CD8-positive, alpha-beta T cell (primary cell): ENCODE measurements at regions of chr17 and their contacts with region 1.

Region 1: DNA sequence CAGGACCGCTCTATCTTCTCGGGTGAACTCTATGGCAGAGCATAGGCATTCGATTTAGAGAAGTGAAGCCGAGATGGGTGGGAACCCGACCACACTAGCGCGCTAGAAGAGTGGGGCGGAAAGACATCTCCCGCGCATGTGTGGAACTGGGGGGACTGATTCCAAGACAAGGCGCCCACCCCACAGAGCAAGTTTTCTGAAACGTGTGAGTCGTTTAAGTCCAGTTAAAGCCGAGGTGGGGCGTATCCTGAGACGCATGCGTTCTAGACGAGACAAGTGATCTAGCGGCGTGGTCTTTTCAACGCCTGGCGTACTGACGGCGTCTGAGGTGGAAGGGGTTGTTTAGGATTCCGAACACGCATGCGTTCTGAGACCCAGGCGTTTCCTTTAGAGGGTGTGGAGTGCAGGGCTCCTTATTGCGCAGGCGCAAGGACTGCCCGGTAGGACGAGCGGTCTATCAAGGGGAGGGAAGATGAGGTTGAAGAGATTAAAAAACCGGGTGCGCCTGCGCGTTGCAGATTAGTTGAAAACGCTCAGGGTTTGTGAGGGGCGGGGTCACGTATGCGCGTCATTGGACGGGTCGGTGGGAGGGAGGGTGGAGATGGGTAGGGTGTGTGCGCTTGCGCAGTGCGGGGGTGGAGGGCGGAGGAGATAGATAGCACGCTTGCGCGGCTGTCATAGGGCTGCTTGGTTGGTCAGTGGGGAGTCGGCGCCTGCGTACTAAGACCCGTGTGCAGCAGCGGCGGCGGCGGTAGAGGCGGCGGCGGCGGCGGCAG is at the start of gene EIF5A:
- DNase-seq: peak; percentile 100
- ATAC-seq: peak; percentile 67
- H3K4me3 ChIP-seq: peak within 1 kb of the TSS; percentile 66 to 92
- H3K4me3 Mint-ChIP-seq: peak within 1 kb of the TSS; percentile 98
- H3K27ac ChIP-seq: peak within 1 kb of the TSS; percentile 91 to 94
- H3K27ac Mint-ChIP-seq: peak within 1 kb of the TSS; percentile 99
- H3K4me1 ChIP-seq: peaks cover 25% of the 10 kb centered on the region
- H3K4me1 Mint-ChIP-seq: peaks cover 40% of the 10 kb centered on the region
- H3K27me3 ChIP-seq: no peaks in the 10 kb centered on the region
- H3K27me3 Mint-ChIP-seq: no peaks in the 10 kb centered on the region
- CTCF ChIP-seq: no peak
- total RNA-seq, gene EIF5A: 581 to 613 TPM

Region 2: DNA sequence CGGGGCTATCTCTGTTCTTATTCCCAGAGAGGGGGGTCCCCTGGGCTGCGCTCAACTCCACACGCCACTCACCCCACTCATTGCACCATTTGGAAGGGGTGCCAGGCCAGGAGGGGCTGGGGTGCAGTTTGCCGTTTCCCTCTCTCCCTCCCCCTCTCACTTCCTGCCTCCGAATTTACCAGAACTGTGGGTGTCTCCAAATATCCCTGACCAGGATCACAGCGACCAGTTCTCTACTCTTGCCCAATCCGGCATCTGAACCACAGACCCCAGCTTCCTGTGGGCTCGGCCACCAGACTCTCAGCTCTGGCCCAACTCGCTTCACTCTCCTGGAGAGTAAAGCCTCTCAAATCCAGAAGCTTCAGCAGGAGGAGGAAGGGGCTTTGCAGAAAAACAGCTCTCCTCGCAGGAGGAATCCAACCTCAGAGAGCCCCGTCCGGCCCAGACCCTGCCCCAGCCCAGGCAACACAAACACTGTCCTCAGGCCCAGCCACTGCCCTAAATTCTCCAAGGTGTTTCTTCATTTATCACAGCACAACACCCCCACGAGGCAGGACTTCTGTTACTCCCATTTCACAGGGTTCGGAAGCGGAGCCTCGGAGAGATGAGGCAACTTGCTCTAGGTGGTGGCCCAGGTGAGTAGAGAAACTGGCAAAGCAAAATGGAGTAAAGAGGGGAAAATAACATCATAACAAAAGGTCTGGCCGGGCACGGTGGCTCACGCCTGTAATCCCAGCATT is 192.1 kb before region 1 on chr17:
- CTCF ChIA-PET with region 1: no interaction called
- POLR2A ChIA-PET with region 1: no interaction called
- intact Hi-C with region 1: no loop called
- DNase-seq: no peak
- ATAC-seq: no peak
- H3K4me3 ChIP-seq: no peak overlapping the region
- H3K4me3 Mint-ChIP-seq: no peak overlapping the region
- H3K27ac ChIP-seq: no peak overlapping the region
- H3K27ac Mint-ChIP-seq: no peak overlapping the region
- H3K4me1 ChIP-seq: no peaks in the 10 kb centered on the region
- H3K4me1 Mint-ChIP-seq: no peaks in the 10 kb centered on the region
- H3K27me3 ChIP-seq: peaks cover 0 to 4% of the 10 kb centered on the region in 2 experiments
- H3K27me3 Mint-ChIP-seq: peaks cover 13% of the 10 kb centered on the region
- CTCF ChIP-seq: no peak

Region 3: GRCh38 chr17:7214300-7215135 is 92.6 kb before region 1 on chr17:
- CTCF ChIA-PET with region 1: interaction called, 4 read pairs
- POLR2A ChIA-PET with region 1: no interaction called
- intact Hi-C with region 1: loop called (anchors 1 kb)
- DNase-seq: peak; percentile 97 to 100 (median 98)
- ATAC-seq: peak; percentile 75
- H3K4me3 ChIP-seq: peak overlapping the region; percentile 36 to 56
- H3K4me3 Mint-ChIP-seq: peak overlapping the region; percentile 90
- H3K27ac ChIP-seq: peak overlapping the region; percentile 80 to 95
- H3K27ac Mint-ChIP-seq: peak overlapping the region; percentile 95
- H3K4me1 ChIP-seq: peaks cover 51% of the 10 kb centered on the region
- H3K4me1 Mint-ChIP-seq: peaks cover 61% of the 10 kb centered on the region
- H3K27me3 ChIP-seq: no peaks in the 10 kb centered on the region
- H3K27me3 Mint-ChIP-seq: no peaks in the 10 kb centered on the region
- CTCF ChIP-seq: peak; percentile 52

Region 4: GRCh38 chr17:7246779-7247178 is 60.3 kb before region 1 on chr17:
- CTCF ChIA-PET with region 1: no interaction called
- POLR2A ChIA-PET with region 1: no interaction called
- intact Hi-C with region 1: no loop called
- DNase-seq: no peak
- ATAC-seq: no peak
- H3K4me3 ChIP-seq: no peak overlapping the region
- H3K4me3 Mint-ChIP-seq: no peak overlapping the region
- H3K27ac ChIP-seq: no peak overlapping the region
- H3K27ac Mint-ChIP-seq: no peak overlapping the region
- H3K4me1 ChIP-seq: peaks cover 27% of the 10 kb centered on the region
- H3K4me1 Mint-ChIP-seq: peaks cover 44% of the 10 kb centered on the region
- H3K27me3 ChIP-seq: no peaks in the 10 kb centered on the region
- H3K27me3 Mint-ChIP-seq: no peaks in the 10 kb centered on the region
- CTCF ChIP-seq: no peak

Region 5: GRCh38 chr17:7280519-7281429 is 26.3 kb before region 1 on chr17:
- CTCF ChIA-PET with region 1: interaction called, 15 read pairs
- POLR2A ChIA-PET with region 1: no interaction called
- intact Hi-C with region 1: no loop called
- DNase-seq: peak; percentile 76 to 92 (median 86)
- ATAC-seq: peak; percentile 88
- H3K4me3 ChIP-seq: peak overlapping the region; percentile 41 to 46
- H3K4me3 Mint-ChIP-seq: peak overlapping the region; percentile 73
- H3K27ac ChIP-seq: no peak overlapping the region
- H3K27ac Mint-ChIP-seq: no peak overlapping the region
- H3K4me1 ChIP-seq: peaks cover 25% of the 10 kb centered on the region
- H3K4me1 Mint-ChIP-seq: peaks cover 16% of the 10 kb centered on the region
- H3K27me3 ChIP-seq: peaks cover 0 to 26% of the 10 kb centered on the region in 2 experiments
- H3K27me3 Mint-ChIP-seq: peaks cover 9% of the 10 kb centered on the region
- CTCF ChIP-seq: peak; percentile 84

Region 6: DNA sequence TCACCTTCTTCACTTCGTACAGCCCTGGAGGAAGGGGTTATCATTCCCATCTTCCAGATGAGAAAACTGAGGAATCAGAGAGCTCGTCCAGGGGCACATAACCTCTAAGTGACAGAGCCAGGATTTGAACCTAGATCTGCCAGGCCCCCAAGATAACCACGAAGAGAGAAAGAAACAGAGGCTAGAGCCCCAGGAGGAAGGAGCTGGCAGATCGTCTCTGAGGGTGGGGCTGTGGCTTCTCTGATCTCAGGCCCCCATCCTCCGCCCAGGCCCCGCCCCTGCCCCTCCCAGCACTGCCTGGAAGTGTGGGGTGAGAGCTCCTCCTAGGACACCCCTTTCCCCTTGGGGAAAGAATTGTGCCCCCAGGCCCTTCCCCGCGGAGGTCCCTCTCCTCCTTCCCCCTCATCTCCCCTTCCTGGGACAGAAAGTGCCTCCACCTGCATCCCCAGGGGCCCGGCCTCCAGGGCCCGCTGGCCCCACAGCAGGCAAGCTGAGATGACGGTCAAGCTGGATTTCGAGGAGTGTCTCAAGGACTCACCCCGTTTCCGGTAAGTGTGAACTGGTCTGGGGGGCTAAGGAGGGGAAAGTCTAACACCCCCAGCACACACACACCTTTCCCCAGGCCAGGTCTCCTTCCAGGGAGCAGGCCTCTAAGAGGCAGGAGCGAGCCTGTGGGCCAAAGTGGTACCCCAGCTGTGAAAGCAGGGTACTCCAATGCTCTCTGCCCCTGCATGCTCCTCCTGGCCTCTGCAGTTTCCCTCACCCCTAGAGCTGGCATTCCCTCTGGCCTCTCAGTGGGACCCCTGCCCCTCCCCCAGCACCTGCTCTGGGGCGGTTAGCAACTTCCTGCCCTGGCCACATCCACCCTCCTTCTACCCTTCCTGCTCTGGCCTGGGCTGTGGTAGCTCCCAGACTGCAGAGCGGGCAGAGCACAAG is 29.4 kb after region 1 on chr17 and contains the start of gene ACAP1:
- CTCF ChIA-PET with region 1: interaction called, 10 read pairs
- POLR2A ChIA-PET with region 1: interaction called, 10 read pairs
- intact Hi-C with region 1: loop called in 1 of 2 experiments (anchors 1 kb)
- DNase-seq: peak; percentile 72 to 93 (median 89)
- ATAC-seq: peak; percentile 98
- H3K4me3 ChIP-seq: peak within 1 kb of the TSS; percentile 74 to 76
- H3K4me3 Mint-ChIP-seq: peak within 1 kb of the TSS; percentile 94
- H3K27ac ChIP-seq: peak within 1 kb of the TSS; percentile 60 to 65
- H3K27ac Mint-ChIP-seq: peak within 1 kb of the TSS; percentile 97
- H3K4me1 ChIP-seq: peaks cover 55% of the 10 kb centered on the region
- H3K4me1 Mint-ChIP-seq: peaks cover 61% of the 10 kb centered on the region
- H3K27me3 ChIP-seq: no peaks in the 10 kb centered on the region
- H3K27me3 Mint-ChIP-seq: no peaks in the 10 kb centered on the region
- CTCF ChIP-seq: no peak
- total RNA-seq, gene ACAP1: 432 to 451 TPM

Region 7: GRCh38 chr17:7572588-7573323 is 265.7 kb after region 1 on chr17:
- CTCF ChIA-PET with region 1: no interaction called
- POLR2A ChIA-PET with region 1: no interaction called
- intact Hi-C with region 1: loop called (anchors 1 kb)
- DNase-seq: peak in 8 of 9 experiments; percentile 99 to 100 (median 100)
- ATAC-seq: peak; percentile 83
- H3K4me3 ChIP-seq: peak overlapping the region; percentile 97 to 100
- H3K4me3 Mint-ChIP-seq: peak overlapping the region; percentile 99
- H3K27ac ChIP-seq: peak overlapping the region; percentile 98 to 99
- H3K27ac Mint-ChIP-seq: peak overlapping the region; percentile 96
- H3K4me1 ChIP-seq: peaks cover 28% of the 10 kb centered on the region
- H3K4me1 Mint-ChIP-seq: peaks cover 48% of the 10 kb centered on the region
- H3K27me3 ChIP-seq: no peaks in the 10 kb centered on the region
- H3K27me3 Mint-ChIP-seq: no peaks in the 10 kb centered on the region
- CTCF ChIP-seq: no peak

Region 8: DNA sequence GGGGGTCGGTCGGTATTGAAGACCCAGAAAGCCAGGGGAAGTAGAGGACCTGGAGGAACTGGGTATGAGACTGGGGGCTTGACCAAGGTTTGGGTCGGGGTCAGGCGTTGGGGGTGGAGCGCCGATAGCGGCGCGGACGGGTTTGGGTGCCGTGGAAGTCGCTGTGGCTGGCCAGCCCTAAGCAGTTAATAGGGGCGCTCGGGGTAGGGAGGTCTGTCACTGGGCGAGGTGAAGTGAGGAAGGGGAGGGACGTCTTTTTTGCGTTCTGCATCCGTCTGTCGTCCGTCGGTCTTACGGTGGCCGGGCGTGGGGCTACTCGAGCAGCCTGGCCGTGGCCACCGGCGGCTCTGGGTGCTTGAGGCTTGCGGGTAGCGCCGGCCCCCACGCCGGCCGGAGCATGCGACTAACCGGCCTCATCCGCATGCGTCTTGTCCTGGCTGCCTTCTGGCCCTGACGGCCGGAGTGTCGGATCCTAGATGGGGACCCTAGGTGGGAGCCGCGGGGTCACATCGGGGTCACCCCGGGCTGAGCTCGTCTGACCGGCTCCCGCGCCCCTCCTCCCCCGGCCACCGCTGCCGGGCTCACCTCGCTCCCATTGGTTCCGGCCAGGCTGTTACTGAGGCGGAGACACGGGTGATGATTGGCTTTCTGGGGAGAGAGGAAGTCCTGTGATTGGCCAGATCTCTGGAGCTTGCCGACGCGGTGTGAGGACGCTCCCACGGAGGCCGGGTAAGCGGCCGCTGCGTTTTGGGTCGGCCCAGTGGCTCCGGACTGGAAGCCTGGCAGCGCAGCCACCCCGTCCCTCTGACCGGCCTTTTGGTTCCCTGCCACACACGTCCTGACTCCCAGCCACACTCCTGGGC is 537.4 kb after region 1 on chr17:
- CTCF ChIA-PET with region 1: no interaction called
- POLR2A ChIA-PET with region 1: no interaction called
- intact Hi-C with region 1: loop called in 1 of 2 experiments (anchors 5 kb)
- DNase-seq: peak; percentile 67 to 94 (median 79)
- ATAC-seq: peak; percentile 8
- H3K4me3 ChIP-seq: peak overlapping the region; percentile 94 to 98
- H3K4me3 Mint-ChIP-seq: peak overlapping the region; percentile 91
- H3K27ac ChIP-seq: peak overlapping the region; percentile 98 to 100
- H3K27ac Mint-ChIP-seq: peak overlapping the region; percentile 99
- H3K4me1 ChIP-seq: peaks cover 39% of the 10 kb centered on the region
- H3K4me1 Mint-ChIP-seq: peaks cover 33% of the 10 kb centered on the region
- H3K27me3 ChIP-seq: no peaks in the 10 kb centered on the region
- H3K27me3 Mint-ChIP-seq: no peaks in the 10 kb centered on the region
- CTCF ChIP-seq: no peak